Naive thymus-derived CD8-positive, alpha-beta T cell (primary cell): ENCODE measurements at regions of chr10 and their contacts with region 1.

Region 1: GRCh38 chr10:71727738-71728737 is 8.5 kb upstream of the C10orf105 start:
- DNase-seq: peak in 9 of 10 donors; percentile 52 to 92 (median 83)
- ATAC-seq: peak; percentile 67 to 74
- H3K4me3 Mint-ChIP-seq: peak overlapping the region; percentile 61 to 84 (median 76)
- H3K27ac Mint-ChIP-seq: peak overlapping the region; percentile 95 to 99 (median 97)
- H3K4me1 Mint-ChIP-seq: peaks cover 44 to 95% (median 92%) of the 10 kb centered on the region in 4 donors
- H3K27me3 Mint-ChIP-seq: no peaks in the 10 kb centered on the region

Region 2: GRCh38 chr10:71696628-71697326 is 31.3 kb before region 1 on chr10:
- POLR2A ChIA-PET with region 1: interaction called, 21 read pairs
- DNase-seq: peak; percentile 40 to 77 (median 62)
- ATAC-seq: peak; percentile 78 to 82
- H3K4me3 Mint-ChIP-seq: peak overlapping the region in 3 of 10 donors; percentile 29 to 36 (median 30)
- H3K27ac Mint-ChIP-seq: peak overlapping the region in 6 of 10 donors; percentile 18 to 81 (median 38)
- H3K4me1 Mint-ChIP-seq: peaks cover 16 to 60% (median 54%) of the 10 kb centered on the region in 4 donors
- H3K27me3 Mint-ChIP-seq: no peaks in the 10 kb centered on the region

Region 3: DNA sequence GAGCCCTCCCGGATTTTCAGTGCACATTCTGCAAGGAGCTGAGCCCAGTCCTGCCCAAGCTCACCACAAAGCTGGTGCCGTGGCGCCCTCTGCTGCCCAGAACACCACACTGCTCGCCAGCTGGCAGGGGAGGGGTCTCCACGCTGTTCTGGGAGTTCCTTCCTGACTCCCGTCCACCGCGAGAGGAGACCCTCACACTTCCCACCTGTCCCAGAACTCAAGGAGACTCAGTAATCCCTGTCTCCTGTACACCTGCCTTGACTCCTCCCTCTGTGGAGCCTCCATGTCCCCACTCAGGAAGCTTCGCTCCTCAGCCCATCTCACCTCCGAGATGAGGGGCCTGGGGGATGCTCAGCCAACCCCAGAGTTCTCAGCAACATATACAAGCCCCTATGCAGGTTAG is 19.7 kb before region 1 on chr10:
- POLR2A ChIA-PET with region 1: interaction called, 317 read pairs
- DNase-seq: peak; percentile 32 to 81 (median 59)
- ATAC-seq: peak; percentile 42 to 65
- H3K4me3 Mint-ChIP-seq: no peak overlapping the region
- H3K27ac Mint-ChIP-seq: peak overlapping the region in 5 of 10 donors; percentile 33 to 78 (median 67)
- H3K4me1 Mint-ChIP-seq: peaks cover 26 to 62% (median 47%) of the 10 kb centered on the region in 4 donors
- H3K27me3 Mint-ChIP-seq: no peaks in the 10 kb centered on the region

Region 4: GRCh38 chr10:71748671-71749191 is 20.7 kb after region 1 on chr10:
- POLR2A ChIA-PET with region 1: interaction called, 1,679 read pairs
- DNase-seq: peak; percentile 59 to 91 (median 81)
- ATAC-seq: peak; percentile 78 to 85
- H3K4me3 Mint-ChIP-seq: peak overlapping the region; percentile 66 to 95 (median 85)
- H3K27ac Mint-ChIP-seq: peak overlapping the region; percentile 95 to 100 (median 98)
- H3K4me1 Mint-ChIP-seq: peaks cover 56 to 100% (median 98%) of the 10 kb centered on the region in 4 donors
- H3K27me3 Mint-ChIP-seq: no peaks in the 10 kb centered on the region

Region 5: DNA sequence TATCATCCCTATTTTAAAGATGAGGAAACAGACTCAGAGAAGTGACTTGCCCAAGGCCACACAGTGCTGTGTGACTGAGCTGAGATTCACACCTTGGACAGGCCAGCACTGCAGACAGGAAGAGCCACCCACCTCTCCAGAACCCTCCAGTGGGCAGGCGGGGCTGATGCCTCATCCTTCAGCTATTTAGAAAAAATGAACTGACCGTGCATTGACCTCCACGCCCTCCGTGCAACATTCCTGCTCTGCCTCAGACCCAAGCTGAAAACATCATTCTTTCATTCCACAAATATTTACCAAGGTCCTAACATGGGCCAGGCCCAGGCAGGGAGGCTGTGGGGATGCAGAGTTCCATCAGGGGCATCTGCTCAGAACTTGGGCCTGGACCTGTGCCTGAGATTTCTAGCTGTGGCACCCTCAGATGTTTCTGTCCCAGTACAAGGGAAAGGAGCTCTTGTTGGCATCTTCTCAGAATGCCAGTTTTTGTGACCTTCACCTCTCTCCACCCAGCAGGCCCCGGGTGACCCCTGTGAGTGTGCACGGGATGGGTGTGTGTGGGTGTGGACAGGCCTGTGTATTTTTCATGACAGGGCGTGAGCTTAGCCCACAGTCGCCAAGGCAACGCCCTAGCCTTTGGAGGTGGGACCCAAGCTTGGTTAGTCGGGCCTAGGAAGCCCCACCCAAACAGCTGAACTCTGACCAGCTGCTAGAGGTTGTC is 38.8 kb after region 1 on chr10:
- POLR2A ChIA-PET with region 1: interaction called, 1,679 read pairs
- DNase-seq: no peak
- ATAC-seq: no peak
- H3K4me3 Mint-ChIP-seq: peak overlapping the region; percentile 68 to 88 (median 79)
- H3K27ac Mint-ChIP-seq: peak overlapping the region; percentile 81 to 98 (median 95)
- H3K4me1 Mint-ChIP-seq: peaks cover 45 to 96% (median 90%) of the 10 kb centered on the region in 4 donors
- H3K27me3 Mint-ChIP-seq: no peaks in the 10 kb centered on the region